Naive thymus-derived CD4-positive, alpha-beta T cell (primary cell): ENCODE measurements at regions of chr17 and their contacts with region 1.

Region 1: GRCh38 chr17:11986942-11987329 is 10.3 kb downstream of the ZNF18 start:
- DNase-seq: no peak
- ATAC-seq: no peak
- H3K4me3 ChIP-seq: no peak overlapping the region
- H3K4me3 Mint-ChIP-seq: no peak overlapping the region
- H3K27ac ChIP-seq: no peak overlapping the region
- H3K27ac Mint-ChIP-seq: no peak overlapping the region
- H3K4me1 ChIP-seq: no peaks in the 10 kb centered on the region
- H3K4me1 Mint-ChIP-seq: peaks cover 5 to 42% (median 24%) of the 10 kb centered on the region in 7 donors
- H3K27me3 ChIP-seq: no peaks in the 10 kb centered on the region
- H3K27me3 Mint-ChIP-seq: no peaks in the 10 kb centered on the region

Region 2: DNA sequence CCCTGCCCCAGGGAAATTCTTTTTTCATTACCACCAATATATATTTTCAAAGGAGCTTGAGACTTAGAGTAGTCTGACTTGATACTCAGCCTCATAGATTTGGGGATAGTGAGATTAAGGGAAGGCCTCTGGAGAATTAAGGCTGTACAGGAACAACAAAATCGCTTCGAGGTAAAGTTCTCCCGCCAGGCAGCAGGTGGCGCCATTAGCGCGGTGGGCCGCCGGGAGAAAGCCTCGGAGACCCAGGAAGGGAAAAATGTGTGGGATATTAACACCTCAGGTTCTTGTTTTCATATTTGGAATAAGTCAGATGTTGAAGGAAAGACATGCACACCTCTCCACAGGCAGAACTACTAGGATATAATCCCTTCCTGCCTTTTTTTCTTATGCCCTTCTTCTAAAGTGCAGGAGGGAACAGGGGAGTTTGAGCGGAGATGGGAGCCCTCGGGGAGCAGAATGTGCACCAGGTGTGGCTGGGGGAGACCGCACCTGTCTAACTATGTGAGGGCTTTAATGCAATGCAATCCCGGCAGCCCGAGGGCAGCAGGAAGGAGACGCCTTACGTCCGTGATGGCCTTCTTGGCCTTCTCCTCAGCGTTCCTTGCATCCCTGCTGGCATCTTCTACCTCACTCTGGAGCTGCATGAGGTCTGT is 1355.8 kb before region 1 on chr17:
- CTCF ChIA-PET with region 1: no interaction called
- POLR2A ChIA-PET with region 1: no interaction called
- intact Hi-C with region 1: loop called in 1 of 2 experiments (anchors 5 kb)
- DNase-seq: peak in 3 of 9 donors; percentile 23 to 40 (median 31)
- ATAC-seq: no peak
- H3K4me3 ChIP-seq: no peak overlapping the region
- H3K4me3 Mint-ChIP-seq: no peak overlapping the region
- H3K27ac ChIP-seq: no peak overlapping the region
- H3K27ac Mint-ChIP-seq: no peak overlapping the region
- H3K4me1 ChIP-seq: no peaks in the 10 kb centered on the region
- H3K4me1 Mint-ChIP-seq: peaks cover 0 to 4% (median 0%) of the 10 kb centered on the region in 7 donors
- H3K27me3 ChIP-seq: no peaks in the 10 kb centered on the region
- H3K27me3 Mint-ChIP-seq: no peaks in the 10 kb centered on the region

Region 3: GRCh38 chr17:11682646-11683045 is 304.3 kb before region 1 on chr17:
- CTCF ChIA-PET with region 1: no interaction called
- POLR2A ChIA-PET with region 1: no interaction called
- intact Hi-C with region 1: no loop called
- DNase-seq: no peak
- ATAC-seq: no peak
- H3K4me3 ChIP-seq: no peak overlapping the region
- H3K4me3 Mint-ChIP-seq: no peak overlapping the region
- H3K27ac ChIP-seq: no peak overlapping the region
- H3K27ac Mint-ChIP-seq: no peak overlapping the region
- H3K4me1 ChIP-seq: no peaks in the 10 kb centered on the region
- H3K4me1 Mint-ChIP-seq: peaks cover 0 to 2% (median 0%) of the 10 kb centered on the region in 7 donors
- H3K27me3 ChIP-seq: no peaks in the 10 kb centered on the region
- H3K27me3 Mint-ChIP-seq: peaks cover 0 to 13% (median 4%) of the 10 kb centered on the region in 5 donors